ENCODE measurements at regions of chr9 and their contacts with region 1.

Region 1: GRCh38 chr9:17436854-17437253 is 142.0 kb upstream of the SH3GL2 start:
- DNase-seq: no peak
- H3K4me3 Mint-ChIP-seq: no peak overlapping the region
- H3K27ac Mint-ChIP-seq: no peak overlapping the region
- H3K4me1 Mint-ChIP-seq: no peaks in the 10 kb centered on the region
- H3K27me3 Mint-ChIP-seq: no peaks in the 10 kb centered on the region

Region 2: DNA sequence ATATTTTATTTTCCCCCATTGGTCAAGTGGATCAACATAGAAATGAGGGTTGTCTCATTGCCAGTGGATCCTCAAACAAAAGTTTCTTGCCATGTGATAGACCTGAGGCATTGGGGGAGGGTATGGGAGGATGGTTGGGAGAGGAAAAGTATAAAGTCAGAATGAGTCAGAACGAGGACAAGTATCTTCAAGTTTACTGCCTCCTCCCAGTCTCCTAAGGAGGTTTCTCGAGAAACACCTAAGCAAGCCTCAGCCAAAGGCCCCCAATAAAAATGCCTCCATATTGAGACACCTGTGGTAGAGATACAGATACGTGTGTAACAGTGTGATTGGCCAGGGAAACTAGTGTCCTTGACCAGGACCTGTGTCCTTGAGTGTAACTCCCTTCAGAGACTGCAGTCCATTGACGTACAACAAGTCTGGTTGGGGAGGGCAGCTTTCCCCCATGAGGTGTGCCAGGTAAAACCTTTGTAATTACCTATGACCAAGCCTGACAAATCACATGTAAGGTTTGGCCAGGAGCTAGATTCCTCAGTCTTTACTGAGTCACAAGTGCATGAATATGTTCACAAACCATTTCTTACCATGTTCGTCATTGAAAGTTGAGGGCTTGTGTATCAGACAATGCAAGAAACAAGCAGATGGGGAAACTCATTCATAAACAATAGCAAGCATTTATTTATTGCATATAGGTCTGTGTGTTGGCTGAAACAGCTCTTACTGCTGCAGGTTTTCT is 56.6 kb before region 1 on chr9:
- CTCF ChIA-PET with region 1: no interaction called
- intact Hi-C with region 1: loop called (anchors 10 kb)
- DNase-seq: no peak
- H3K4me3 Mint-ChIP-seq: no peak overlapping the region
- H3K27ac Mint-ChIP-seq: no peak overlapping the region
- H3K4me1 Mint-ChIP-seq: no peaks in the 10 kb centered on the region
- H3K27me3 Mint-ChIP-seq: no peaks in the 10 kb centered on the region

Measured in activated naive CD4-positive, alpha-beta T cell treated with anti-CD3 and anti-CD28 coated beads for 36 hours (primary cell).